A673 (cell line): ENCODE measurements at regions of chr11 and their contacts with region 1.

Region 1: DNA sequence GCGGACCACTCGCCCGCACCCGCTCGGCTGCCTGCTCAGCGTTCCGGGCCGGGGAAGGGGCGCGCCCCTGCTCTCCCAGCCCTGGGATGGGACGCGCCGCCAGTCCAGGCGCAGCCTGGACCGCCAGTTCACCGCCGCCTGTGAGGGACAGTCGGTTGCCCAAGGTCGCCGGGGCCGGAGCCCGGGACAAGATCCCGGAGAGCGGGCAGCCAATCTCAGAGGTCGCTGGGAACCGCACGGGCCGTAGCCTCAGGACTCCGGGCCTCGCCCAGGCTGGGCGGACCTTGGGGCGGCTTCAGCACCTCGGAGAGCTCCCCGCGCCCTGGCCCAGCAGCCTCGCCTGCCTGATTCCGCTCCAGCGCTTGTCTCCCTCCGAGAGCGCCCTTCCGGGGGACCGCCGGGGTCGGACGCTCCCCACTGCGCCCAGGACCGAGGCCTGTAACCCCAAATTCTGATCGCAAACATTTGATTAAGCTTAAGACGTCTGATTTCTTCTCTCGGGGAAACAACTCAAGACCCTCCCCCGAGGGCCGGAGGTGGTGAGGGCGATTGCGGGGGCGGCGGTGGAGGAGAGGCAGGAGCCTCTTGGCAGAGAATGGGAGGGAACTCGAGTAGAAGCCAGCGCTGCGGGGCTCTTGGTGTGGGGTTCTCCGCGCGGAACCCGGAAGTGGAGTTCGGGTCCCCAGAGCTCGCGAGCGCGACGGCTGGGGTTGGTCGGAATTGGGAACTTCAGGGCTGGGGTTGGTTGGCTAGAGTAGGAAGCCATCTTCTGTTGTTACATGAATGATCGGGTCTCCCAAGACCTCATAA is 1.1 kb upstream of the CHRM4 start:
- DNase-seq: peak; percentile 92
- H3K4me3 ChIP-seq: peak overlapping the region; percentile 51
- H3K27ac ChIP-seq: no peak overlapping the region
- H3K4me1 ChIP-seq: peaks cover 39% of the 10 kb centered on the region
- H3K27me3 ChIP-seq: peaks cover 47% of the 10 kb centered on the region
- CTCF ChIP-seq: peak; percentile 7; the same call in 1 of the 2 replicates

Region 2: GRCh38 chr11:45724145-45724544 is 668.5 kb before region 1 on chr11:
- CTCF ChIA-PET with region 1: no interaction called
- POLR2A ChIA-PET with region 1: no interaction called
- intact Hi-C with region 1: no loop called
- DNase-seq: no peak
- H3K4me3 ChIP-seq: no peak overlapping the region
- H3K27ac ChIP-seq: no peak overlapping the region
- H3K4me1 ChIP-seq: peaks cover 10% of the 10 kb centered on the region
- H3K27me3 ChIP-seq: no peaks in the 10 kb centered on the region
- CTCF ChIP-seq: no peak

Region 3: GRCh38 chr11:46529095-46529905 is 136.7 kb after region 1 on chr11:
- CTCF ChIA-PET with region 1: interaction called, 16 read pairs
- POLR2A ChIA-PET with region 1: no interaction called
- intact Hi-C with region 1: loop called (anchors 2 kb)
- DNase-seq: peak; percentile 89
- H3K4me3 ChIP-seq: no peak overlapping the region
- H3K27ac ChIP-seq: no peak overlapping the region
- H3K4me1 ChIP-seq: peaks cover 14% of the 10 kb centered on the region
- H3K27me3 ChIP-seq: no peaks in the 10 kb centered on the region
- CTCF ChIP-seq: peak; percentile 100

Region 4: GRCh38 chr11:46601129-46601528 is 208.5 kb after region 1 on chr11:
- CTCF ChIA-PET with region 1: no interaction called
- POLR2A ChIA-PET with region 1: no interaction called
- intact Hi-C with region 1: no loop called
- DNase-seq: no peak
- H3K4me3 ChIP-seq: no peak overlapping the region
- H3K27ac ChIP-seq: no peak overlapping the region
- H3K4me1 ChIP-seq: no peaks in the 10 kb centered on the region
- H3K27me3 ChIP-seq: no peaks in the 10 kb centered on the region
- CTCF ChIP-seq: no peak

Region 5: GRCh38 chr11:46616998-46617675 is 224.5 kb after region 1 on chr11 and contains the starts of genes ATG13 and HARBI1:
- CTCF ChIA-PET with region 1: no interaction called
- POLR2A ChIA-PET with region 1: no interaction called
- intact Hi-C with region 1: loop called (anchors 2 kb)
- DNase-seq: peak; percentile 98
- H3K4me3 ChIP-seq: peak within 1 kb of the TSS; percentile 65
- H3K27ac ChIP-seq: peak within 1 kb of the TSS; percentile 97
- H3K4me1 ChIP-seq: peaks cover 23% of the 10 kb centered on the region
- H3K27me3 ChIP-seq: no peaks in the 10 kb centered on the region
- CTCF ChIP-seq: no peak
- total RNA-seq, gene ATG13: 155 and 158 TPM in 2 replicates
- total RNA-seq, gene HARBI1: 10.1 and 11.6 TPM in 2 replicates

Region 6: GRCh38 chr11:46808799-46809431 is 416.3 kb after region 1 on chr11:
- CTCF ChIA-PET with region 1: no interaction called
- POLR2A ChIA-PET with region 1: no interaction called
- intact Hi-C with region 1: loop called (anchors 10 kb)
- DNase-seq: peak; percentile 87
- H3K4me3 ChIP-seq: no peak overlapping the region
- H3K27ac ChIP-seq: no peak overlapping the region
- H3K4me1 ChIP-seq: no peaks in the 10 kb centered on the region
- H3K27me3 ChIP-seq: no peaks in the 10 kb centered on the region
- CTCF ChIP-seq: peak; percentile 82